GM18951 (cell line): ENCODE measurements at regions of chr11 and their contacts with region 1.

Region 1: GRCh38 chr11:128949791-128950454 is 7.3 kb upstream of the TP53AIP1 start:
- POLR2A ChIP-seq: no peak

Region 2: GRCh38 chr11:128884703-128885338 is 65.1 kb before region 1 on chr11:
- in situ Hi-C with region 1: loop called (anchors 5 kb)
- POLR2A ChIP-seq: no peak

Region 3: DNA sequence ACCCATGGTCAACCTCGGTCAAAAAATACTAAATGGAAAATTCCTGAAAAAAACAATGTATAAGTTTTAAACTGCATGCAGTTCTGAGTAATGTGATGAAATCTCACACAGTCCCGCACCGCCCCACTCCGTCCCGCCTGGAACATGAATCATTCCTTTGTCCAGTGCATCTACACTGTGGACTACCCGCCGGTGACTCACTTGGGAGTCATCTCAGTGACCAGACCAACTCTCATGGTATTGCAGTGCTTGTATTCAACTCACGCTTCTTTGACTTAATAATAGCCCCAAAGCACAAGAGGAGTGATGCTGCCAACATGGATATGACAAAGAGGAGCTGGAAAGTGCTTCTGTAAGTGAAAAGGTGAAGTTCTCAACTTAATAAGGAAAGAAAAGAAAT is 193.4 kb after region 1 on chr11:
- in situ Hi-C with region 1: no loop called
- POLR2A ChIP-seq: no peak